Dorsolateral prefrontal cortex (tissue), 120 donors: ENCODE measurements at regions of chr5 and their contacts with region 1.

Region 1: GRCh38 chr5:78157001-78157400 is 137.5 kb downstream of the AP3B1 start:
- DNase-seq: no peak
- H3K4me3 ChIP-seq: no peak overlapping the region
- H3K27ac ChIP-seq: no peak overlapping the region
- H3K27me3 ChIP-seq: no peaks in the 10 kb centered on the region
- CTCF ChIP-seq: no peak

Region 2: GRCh38 chr5:76874088-76874581 is 1282.9 kb before region 1 on chr5:
- intact Hi-C with region 1: no loop called
- DNase-seq: no peak
- H3K4me3 ChIP-seq: no peak overlapping the region
- H3K27ac ChIP-seq: no peak overlapping the region
- H3K27me3 ChIP-seq: no peaks in the 10 kb centered on the region
- CTCF ChIP-seq: no peak

Region 3: DNA sequence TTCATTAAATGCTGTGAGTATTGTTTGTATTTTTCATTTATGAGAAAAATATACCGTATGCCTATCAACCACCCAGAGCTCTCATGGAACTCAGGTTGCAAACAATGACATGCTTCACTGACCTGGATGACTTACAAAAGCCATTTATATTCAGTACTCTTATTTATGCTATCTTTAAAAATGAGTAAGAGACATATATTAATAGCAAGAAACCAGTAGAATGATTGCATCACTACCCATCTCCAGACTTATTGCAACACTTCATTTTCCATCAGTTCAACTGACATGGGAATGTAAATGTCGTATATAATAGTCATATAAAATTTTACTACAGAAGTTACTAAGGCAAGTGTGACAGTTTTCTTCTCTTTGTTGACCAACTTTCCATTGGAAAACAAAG is 587.6 kb before region 1 on chr5:
- intact Hi-C with region 1: loop called in 1 of 2 experiments (anchors 5 kb)
- DNase-seq: no peak
- H3K4me3 ChIP-seq: no peak overlapping the region
- H3K27ac ChIP-seq: no peak overlapping the region
- H3K27me3 ChIP-seq: peaks cover 0 to 36% (median 0%) of the 10 kb centered on the region in 45 donors
- CTCF ChIP-seq: no peak

Region 4: GRCh38 chr5:77993855-77994318 is 163.1 kb before region 1 on chr5:
- intact Hi-C with region 1: no loop called
- DNase-seq: peak in 9 of 10 donors; percentile 66 to 93 (median 78)
- H3K4me3 ChIP-seq: peak overlapping the region in 56 of 59 donors; percentile 6 to 54 (median 34)
- H3K27ac ChIP-seq: peak overlapping the region; percentile 7 to 99 (median 96)
- H3K27me3 ChIP-seq: no peaks in the 10 kb centered on the region
- CTCF ChIP-seq: peak in 4 of 56 donors; percentile 7 to 20 (median 11)

Region 5: DNA sequence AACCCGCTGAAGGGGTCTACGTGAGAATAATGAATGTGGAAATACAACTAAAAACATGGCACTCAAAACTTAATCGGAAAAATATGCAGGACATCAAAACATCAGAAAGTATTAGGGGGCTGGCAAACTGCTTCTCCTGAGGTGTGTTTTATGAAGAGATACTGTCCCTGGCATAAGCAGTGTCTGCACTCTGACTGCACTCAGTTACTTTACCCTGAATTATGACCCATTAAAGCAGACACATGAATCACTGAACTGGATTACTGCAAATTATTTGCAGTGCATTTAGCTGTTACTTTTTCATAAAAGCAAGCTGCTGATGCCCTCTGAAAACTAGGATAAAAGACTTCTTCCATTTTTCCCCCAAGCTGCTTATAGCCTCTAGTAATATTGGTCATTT is 27.4 kb before region 1 on chr5:
- intact Hi-C with region 1: no loop called
- DNase-seq: no peak
- H3K4me3 ChIP-seq: no peak overlapping the region
- H3K27ac ChIP-seq: no peak overlapping the region
- H3K27me3 ChIP-seq: no peaks in the 10 kb centered on the region
- CTCF ChIP-seq: no peak

Region 6: GRCh38 chr5:78182790-78183189 is 25.8 kb after region 1 on chr5:
- intact Hi-C with region 1: no loop called
- DNase-seq: no peak
- H3K4me3 ChIP-seq: no peak overlapping the region
- H3K27ac ChIP-seq: no peak overlapping the region
- H3K27me3 ChIP-seq: no peaks in the 10 kb centered on the region
- CTCF ChIP-seq: no peak